ENCODE measurements at regions of chr17 and their contacts with region 1.

Region 1: GRCh38 chr17:45051060-45051719 is at the start of gene DCAKD:
- DNase-seq: peak; percentile 75 to 98 (median 86)
- ATAC-seq: peak; percentile 85
- H3K4me3 ChIP-seq: peak within 1 kb of the TSS; percentile 82
- H3K4me3 Mint-ChIP-seq: peak within 1 kb of the TSS; percentile 88
- H3K27ac ChIP-seq: peak within 1 kb of the TSS; percentile 83 to 96
- H3K27ac Mint-ChIP-seq: peak within 1 kb of the TSS; percentile 96
- H3K4me1 ChIP-seq: peaks cover 43% of the 10 kb centered on the region
- H3K4me1 Mint-ChIP-seq: peaks cover 33% of the 10 kb centered on the region
- H3K27me3 ChIP-seq: no peaks in the 10 kb centered on the region
- H3K27me3 Mint-ChIP-seq: no peaks in the 10 kb centered on the region
- CTCF ChIP-seq: no peak
- total RNA-seq, gene DCAKD: 11.6 to 12.2 TPM

Region 2: GRCh38 chr17:44533533-44534246 is 517.5 kb before region 1 on chr17:
- CTCF ChIA-PET with region 1: no interaction called
- POLR2A ChIA-PET with region 1: no interaction called
- intact Hi-C with region 1: no loop called
- DNase-seq: peak; percentile 70 to 89 (median 84)
- ATAC-seq: peak; percentile 96
- H3K4me3 ChIP-seq: no peak overlapping the region
- H3K4me3 Mint-ChIP-seq: no peak overlapping the region
- H3K27ac ChIP-seq: no peak overlapping the region
- H3K27ac Mint-ChIP-seq: no peak overlapping the region
- H3K4me1 ChIP-seq: peaks cover 8% of the 10 kb centered on the region
- H3K4me1 Mint-ChIP-seq: no peaks in the 10 kb centered on the region
- H3K27me3 ChIP-seq: no peaks in the 10 kb centered on the region
- H3K27me3 Mint-ChIP-seq: peaks cover 26% of the 10 kb centered on the region
- CTCF ChIP-seq: peak; percentile 86

Region 3: DNA sequence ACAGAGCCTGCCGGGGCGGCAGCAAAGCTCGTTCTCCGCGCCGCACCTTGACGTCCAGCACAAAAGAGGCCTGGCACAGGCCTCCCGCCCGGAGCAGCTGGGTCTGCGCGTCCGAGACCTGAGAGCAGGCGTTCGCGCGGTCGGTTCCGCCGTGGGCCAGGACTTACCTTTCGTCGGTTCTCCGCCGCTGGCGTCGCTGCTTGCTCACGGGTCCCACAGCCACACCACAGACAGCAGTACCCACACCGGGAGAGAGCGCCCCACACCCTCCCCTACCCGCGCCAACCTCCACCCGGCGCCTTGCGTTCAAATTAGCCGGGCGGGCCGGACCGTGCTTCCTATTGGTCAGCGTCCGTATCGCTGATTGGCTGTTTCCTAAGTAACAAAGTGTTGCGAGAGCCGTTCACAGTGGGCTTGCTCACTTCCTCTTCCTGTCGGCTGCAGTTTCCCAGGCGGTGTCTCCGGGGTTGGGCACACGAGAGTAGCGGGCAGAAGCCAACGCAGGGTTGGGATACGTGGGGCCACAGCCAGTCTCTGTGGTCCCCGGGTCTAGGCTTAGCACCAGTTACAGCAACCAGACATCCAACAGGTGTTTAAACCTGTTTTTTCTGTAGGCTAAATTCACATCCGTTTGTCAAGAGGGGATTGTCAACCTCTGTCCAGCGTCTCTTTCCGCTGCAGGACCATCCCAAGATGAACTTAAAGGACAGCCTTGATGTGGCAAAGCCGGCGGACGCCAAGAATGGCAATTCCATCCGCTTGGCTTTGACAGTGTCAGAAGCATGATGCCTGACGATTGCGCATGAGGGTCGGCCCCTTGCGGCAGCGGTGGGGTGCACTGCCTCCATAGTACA is 103.5 kb before region 1 on chr17 and contains the start of gene KIF18B:
- CTCF ChIA-PET with region 1: no interaction called
- POLR2A ChIA-PET with region 1: no interaction called
- intact Hi-C with region 1: loop called in 1 of 2 experiments (anchors 5 kb)
- DNase-seq: peak; percentile 77 to 94 (median 84)
- ATAC-seq: peak; percentile 98
- H3K4me3 ChIP-seq: peak within 1 kb of the TSS; percentile 60
- H3K4me3 Mint-ChIP-seq: peak within 1 kb of the TSS; percentile 93
- H3K27ac ChIP-seq: peak within 1 kb of the TSS in 1 of 2 donors; percentile 25
- H3K27ac Mint-ChIP-seq: peak within 1 kb of the TSS; percentile 85
- H3K4me1 ChIP-seq: peaks cover 20% of the 10 kb centered on the region
- H3K4me1 Mint-ChIP-seq: peaks cover 7% of the 10 kb centered on the region
- H3K27me3 ChIP-seq: peaks cover 0 to 5% of the 10 kb centered on the region in 2 experiments
- H3K27me3 Mint-ChIP-seq: no peaks in the 10 kb centered on the region
- CTCF ChIP-seq: no peak
- total RNA-seq, gene KIF18B: 0.05 to 0.08 TPM

Region 4: DNA sequence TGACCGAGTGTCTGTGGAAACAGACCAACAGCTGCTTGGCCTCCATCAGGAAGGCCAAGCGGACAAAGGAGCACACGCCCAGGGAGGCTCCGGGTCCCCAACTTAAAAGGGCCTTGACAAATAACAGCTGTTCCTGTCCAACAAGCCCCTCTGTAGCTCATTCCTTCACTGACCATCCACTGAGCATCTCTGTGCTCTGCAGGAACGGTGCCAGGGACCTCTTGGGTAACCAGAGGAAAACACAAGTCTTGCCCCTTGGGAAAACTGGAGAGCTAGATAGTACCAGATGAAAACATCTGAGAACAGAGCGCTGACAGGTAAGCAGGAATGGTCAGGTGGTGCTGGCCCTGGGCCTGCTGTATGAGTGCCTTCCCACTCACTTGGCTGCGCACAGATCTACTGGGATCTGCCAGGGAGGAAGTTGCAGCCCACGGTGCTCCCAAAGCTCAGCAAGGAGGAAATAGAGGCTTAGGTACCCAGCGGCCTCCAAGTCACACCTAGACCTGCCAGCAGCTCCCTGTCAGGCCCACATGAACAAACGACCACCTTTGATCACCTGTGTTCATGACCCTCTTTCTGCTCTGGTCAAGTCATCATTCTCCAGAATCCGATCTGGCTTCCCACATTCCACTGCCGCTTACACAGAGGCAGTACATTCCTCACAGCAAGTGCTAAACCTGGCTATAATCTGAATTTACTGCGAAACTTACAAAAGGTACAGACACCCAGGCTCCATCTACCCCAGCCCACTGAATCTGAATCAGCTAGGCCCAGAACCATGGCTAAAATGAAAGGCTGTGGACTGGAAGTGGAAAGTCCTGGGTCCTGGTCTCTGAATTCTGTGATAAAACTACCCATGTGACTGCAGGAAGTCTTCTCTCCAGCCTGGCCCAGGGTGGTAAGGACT is 12.2 kb before region 1 on chr17:
- CTCF ChIA-PET with region 1: no interaction called
- POLR2A ChIA-PET with region 1: interaction called, 10 read pairs
- intact Hi-C with region 1: no loop called
- DNase-seq: no peak
- ATAC-seq: no peak
- H3K4me3 ChIP-seq: no peak overlapping the region
- H3K4me3 Mint-ChIP-seq: no peak overlapping the region
- H3K27ac ChIP-seq: no peak overlapping the region
- H3K27ac Mint-ChIP-seq: no peak overlapping the region
- H3K4me1 ChIP-seq: peaks cover 19% of the 10 kb centered on the region
- H3K4me1 Mint-ChIP-seq: peaks cover 5% of the 10 kb centered on the region
- H3K27me3 ChIP-seq: no peaks in the 10 kb centered on the region
- H3K27me3 Mint-ChIP-seq: no peaks in the 10 kb centered on the region
- CTCF ChIP-seq: no peak

Measured in CD4-positive, alpha-beta T cell (primary cell).